ENCODE measurements at regions of chr16 and their contacts with region 1.

Region 1: DNA sequence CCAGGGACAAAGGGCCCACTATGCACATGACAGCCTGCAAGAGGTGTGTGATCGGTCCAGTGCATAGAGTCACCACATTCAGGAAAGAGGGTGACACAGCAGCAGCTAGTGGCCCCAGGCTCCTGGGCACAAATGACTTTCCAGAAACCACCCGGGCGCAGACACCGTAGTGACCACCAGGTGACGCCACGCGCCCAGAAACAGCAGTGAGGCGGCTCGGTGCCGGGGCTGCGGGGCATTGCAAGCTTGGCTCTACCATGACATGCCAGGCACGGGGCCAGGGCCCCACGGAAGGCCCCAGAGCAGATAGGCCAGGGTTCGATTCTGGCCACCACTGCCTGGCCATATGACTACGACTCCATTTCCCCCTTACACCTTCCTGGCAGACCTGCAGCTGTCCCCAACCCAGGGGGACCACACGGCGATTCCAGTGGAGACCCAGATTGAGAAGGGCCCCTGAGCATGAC is 6.7 kb downstream of the RHBDF1 start:
- DNase-seq: peak; percentile 92
- ATAC-seq: peak; percentile 80
- H3K4me3 Mint-ChIP-seq: no peak overlapping the region
- H3K27ac Mint-ChIP-seq: no peak overlapping the region
- H3K4me1 Mint-ChIP-seq: peaks cover 19% of the 10 kb centered on the region
- H3K27me3 Mint-ChIP-seq: no peaks in the 10 kb centered on the region
- CTCF ChIP-seq: peak; percentile 93

Region 2: GRCh38 chr16:38939-39892 is 26.5 kb before region 1 on chr16:
- CTCF ChIA-PET with region 1: interaction called, 11 read pairs
- POLR2A ChIA-PET with region 1: interaction called, 5 read pairs
- DNase-seq: no peak
- ATAC-seq: peak; percentile 20
- H3K4me3 Mint-ChIP-seq: no peak overlapping the region
- H3K27ac Mint-ChIP-seq: no peak overlapping the region
- H3K4me1 Mint-ChIP-seq: no peaks in the 10 kb centered on the region; the same call in 1 of the 2 replicates
- H3K27me3 Mint-ChIP-seq: no peaks in the 10 kb centered on the region
- CTCF ChIP-seq: no peak

Region 3: DNA sequence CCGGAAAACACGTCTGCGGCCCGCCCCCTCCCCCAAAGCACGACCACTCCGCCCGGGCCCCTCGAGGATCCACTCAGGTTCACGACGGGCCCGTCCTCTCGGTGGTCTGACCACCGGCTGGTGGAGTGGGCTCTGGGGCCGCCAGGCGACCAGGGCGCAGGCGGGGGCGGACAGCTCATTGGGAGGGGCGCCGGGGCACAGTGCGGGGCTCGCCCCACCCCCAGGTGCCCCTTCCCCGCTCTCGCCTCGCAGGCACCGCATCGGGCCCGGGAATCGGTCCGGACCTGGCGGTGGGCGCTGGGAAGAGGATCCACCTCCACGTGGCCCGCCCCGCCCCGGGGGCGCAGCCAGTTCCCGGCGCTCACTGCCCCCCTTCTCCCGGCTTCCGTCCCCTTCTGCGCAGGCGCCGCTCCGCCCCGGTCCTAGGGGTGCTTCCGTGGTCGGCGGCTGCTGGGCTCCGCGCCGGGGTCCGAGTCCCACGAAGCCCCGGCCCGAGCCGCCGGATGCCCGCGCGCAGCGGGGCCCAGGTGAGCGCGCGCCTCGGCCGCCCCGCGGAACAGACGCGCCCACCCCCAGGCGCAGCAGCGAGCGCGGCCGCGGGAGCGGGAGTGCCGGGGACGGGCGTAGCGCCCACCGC is 12.2 kb after region 1 on chr16 and contains the start of gene MPG:
- CTCF ChIA-PET with region 1: interaction called, 61 read pairs
- POLR2A ChIA-PET with region 1: interaction called, 3 read pairs
- DNase-seq: peak; percentile 75
- ATAC-seq: peak; percentile 49
- H3K4me3 Mint-ChIP-seq: peak within 1 kb of the TSS; percentile 82
- H3K27ac Mint-ChIP-seq: no peak within 1 kb of the TSS; the same call in 1 of the 2 replicates
- H3K4me1 Mint-ChIP-seq: peaks cover 54% of the 10 kb centered on the region
- H3K27me3 Mint-ChIP-seq: no peaks in the 10 kb centered on the region; the same call in 1 of the 2 replicates
- CTCF ChIP-seq: no peak
- total RNA-seq, gene MPG: 60.0 to 62.0 TPM (median 60.0 TPM) in 3 replicates

Region 4: GRCh38 chr16:117379-118365 is 52.0 kb after region 1 on chr16:
- CTCF ChIA-PET with region 1: interaction called, 17 read pairs
- POLR2A ChIA-PET with region 1: no interaction called
- DNase-seq: peak; percentile 84
- ATAC-seq: peak; percentile 97
- H3K4me3 Mint-ChIP-seq: no peak overlapping the region
- H3K27ac Mint-ChIP-seq: no peak overlapping the region
- H3K4me1 Mint-ChIP-seq: peaks cover 5% of the 10 kb centered on the region
- H3K27me3 Mint-ChIP-seq: no peaks in the 10 kb centered on the region
- CTCF ChIP-seq: peak; percentile 92

Region 5: DNA sequence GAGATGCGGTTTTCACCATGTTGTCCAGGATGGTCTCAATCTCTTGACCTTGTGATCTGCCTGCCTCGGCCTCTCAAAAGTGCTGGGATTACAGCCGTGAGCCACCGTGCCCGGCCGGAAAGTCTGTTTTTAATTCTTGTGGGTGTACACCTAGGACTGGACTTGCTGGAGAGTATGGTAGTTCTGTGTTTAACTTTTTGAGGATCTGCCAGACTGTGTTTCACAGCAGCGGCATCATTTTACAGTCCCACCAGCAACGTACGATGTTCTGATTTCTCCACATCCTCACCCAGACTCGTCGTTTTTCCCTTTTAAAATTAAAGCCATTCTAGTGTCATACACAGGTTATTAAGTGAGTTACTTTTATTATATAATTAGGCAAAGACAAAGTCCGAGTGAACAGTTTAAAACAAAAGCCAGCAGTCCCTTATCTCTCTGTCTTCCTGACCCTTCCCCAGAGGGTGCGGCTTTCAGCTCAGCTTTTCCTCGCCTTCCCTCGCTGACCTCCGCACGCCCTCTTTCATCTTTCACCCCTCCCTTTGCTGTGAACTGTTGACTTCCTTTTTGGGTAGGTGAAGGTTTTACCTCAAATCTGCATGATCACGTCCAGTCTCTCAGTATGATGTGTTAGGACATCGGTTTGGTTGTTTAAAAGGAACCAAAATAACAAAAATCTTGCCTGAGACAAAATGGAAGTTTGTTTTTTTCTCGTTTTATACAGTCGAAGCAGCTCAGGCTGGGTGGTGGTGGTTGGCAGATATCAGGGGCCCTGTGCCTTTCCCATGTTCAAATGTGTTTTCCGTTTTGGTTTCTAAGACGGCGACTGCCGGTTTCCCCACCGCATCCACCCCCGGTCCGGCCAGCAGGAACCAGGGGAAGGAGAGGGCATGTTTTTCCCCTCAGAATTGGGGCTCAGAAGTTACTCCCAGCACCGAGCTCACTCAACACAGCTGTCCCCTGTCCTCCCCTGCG is 186.9 kb after region 1 on chr16:
- CTCF ChIA-PET with region 1: no interaction called
- POLR2A ChIA-PET with region 1: no interaction called
- DNase-seq: no peak
- ATAC-seq: no peak
- H3K4me3 Mint-ChIP-seq: no peak overlapping the region
- H3K27ac Mint-ChIP-seq: peak overlapping the region; percentile 95; the same call in 1 of the 2 replicates
- H3K4me1 Mint-ChIP-seq: no peaks in the 10 kb centered on the region
- H3K27me3 Mint-ChIP-seq: no peaks in the 10 kb centered on the region
- CTCF ChIP-seq: no peak

Region 6: GRCh38 chr16:361872-362701 is 296.4 kb after region 1 on chr16:
- CTCF ChIA-PET with region 1: interaction called, 18 read pairs
- POLR2A ChIA-PET with region 1: no interaction called
- DNase-seq: peak; percentile 83
- ATAC-seq: peak; percentile 79
- H3K4me3 Mint-ChIP-seq: no peak overlapping the region
- H3K27ac Mint-ChIP-seq: no peak overlapping the region
- H3K4me1 Mint-ChIP-seq: no peaks in the 10 kb centered on the region
- H3K27me3 Mint-ChIP-seq: no peaks in the 10 kb centered on the region
- CTCF ChIP-seq: 0 out of 2 replicates have a peak, but pooled peaks have one; percentile 30